Activated CD4-positive, alpha-beta T cell treated with anti-CD3 and anti-CD28 coated beads for 36 hours (primary cell): ENCODE measurements at regions of chr10 and their contacts with region 1.

Region 1: GRCh38 chr10:84537447-84537931 is 209.1 kb downstream of the CCSER2 start:
- DNase-seq: peak; percentile 55
- ATAC-seq: peak; percentile 70
- H3K4me3 Mint-ChIP-seq: no peak overlapping the region
- H3K27ac Mint-ChIP-seq: no peak overlapping the region
- H3K4me1 Mint-ChIP-seq: peaks cover 23% of the 10 kb centered on the region
- H3K27me3 Mint-ChIP-seq: peaks cover 17% of the 10 kb centered on the region

Region 2: GRCh38 chr10:84264611-84265141 is 272.8 kb before region 1 on chr10:
- CTCF ChIA-PET with region 1: interaction called, 231 read pairs
- POLR2A ChIA-PET with region 1: interaction called, 3 read pairs
- intact Hi-C with region 1: loop called (anchors 1 kb)
- DNase-seq: peak; percentile 86
- ATAC-seq: peak; percentile 80
- H3K4me3 Mint-ChIP-seq: no peak overlapping the region
- H3K27ac Mint-ChIP-seq: no peak overlapping the region
- H3K4me1 Mint-ChIP-seq: peaks cover 27% of the 10 kb centered on the region
- H3K27me3 Mint-ChIP-seq: peaks cover 10% of the 10 kb centered on the region

Region 3: GRCh38 chr10:84352251-84352842 is 185.1 kb before region 1 on chr10:
- CTCF ChIA-PET with region 1: interaction called, 15 read pairs
- POLR2A ChIA-PET with region 1: no interaction called
- intact Hi-C with region 1: loop called (anchors 1 kb)
- DNase-seq: peak; percentile 85
- ATAC-seq: peak; percentile 88
- H3K4me3 Mint-ChIP-seq: no peak overlapping the region
- H3K27ac Mint-ChIP-seq: no peak overlapping the region
- H3K4me1 Mint-ChIP-seq: peaks cover 74% of the 10 kb centered on the region
- H3K27me3 Mint-ChIP-seq: no peaks in the 10 kb centered on the region

Region 4: GRCh38 chr10:84429926-84430520 is 107.5 kb before region 1 on chr10:
- CTCF ChIA-PET with region 1: interaction called, 31 read pairs
- POLR2A ChIA-PET with region 1: no interaction called
- intact Hi-C with region 1: loop called (anchors 1 kb)
- DNase-seq: peak; percentile 82
- ATAC-seq: peak; percentile 90
- H3K4me3 Mint-ChIP-seq: no peak overlapping the region
- H3K27ac Mint-ChIP-seq: no peak overlapping the region
- H3K4me1 Mint-ChIP-seq: peaks cover 31% of the 10 kb centered on the region
- H3K27me3 Mint-ChIP-seq: no peaks in the 10 kb centered on the region

Region 5: GRCh38 chr10:84715911-84716310 is 178.4 kb after region 1 on chr10:
- CTCF ChIA-PET with region 1: interaction called, 3 read pairs
- POLR2A ChIA-PET with region 1: no interaction called
- intact Hi-C with region 1: loop called (anchors 1 to 10 kb)
- DNase-seq: peak; percentile 36
- ATAC-seq: no peak
- H3K4me3 Mint-ChIP-seq: no peak overlapping the region
- H3K27ac Mint-ChIP-seq: no peak overlapping the region
- H3K4me1 Mint-ChIP-seq: no peaks in the 10 kb centered on the region
- H3K27me3 Mint-ChIP-seq: peaks cover 12% of the 10 kb centered on the region